Esophagus muscularis mucosa (tissue), 4 donors: ENCODE measurements at regions of chr4 and their contacts with region 1.

Region 1: GRCh38 chr4:154399259-154399974 is 92.2 kb downstream of the DCHS2 start:
- DNase-seq: no peak
- H3K4me3 ChIP-seq: peak overlapping the region; percentile 13 to 40 (median 23)
- H3K27ac ChIP-seq: no peak overlapping the region
- H3K4me1 ChIP-seq: no peaks in the 10 kb centered on the region
- H3K27me3 ChIP-seq: no peaks in the 10 kb centered on the region
- CTCF ChIP-seq: peak; percentile 31 to 47 (median 44)
- EP300 ChIP-seq: no peak
- POLR2A ChIP-seq: no peak

Region 2: GRCh38 chr4:154160519-154161301 is 238.7 kb before region 1 on chr4:
- intact Hi-C with region 1: no loop called
- DNase-seq: no peak
- H3K4me3 ChIP-seq: no peak overlapping the region
- H3K27ac ChIP-seq: no peak overlapping the region
- H3K4me1 ChIP-seq: peaks cover 0 to 10% (median 4%) of the 10 kb centered on the region in 4 donors
- H3K27me3 ChIP-seq: no peaks in the 10 kb centered on the region
- CTCF ChIP-seq: no peak
- EP300 ChIP-seq: no peak
- POLR2A ChIP-seq: no peak

Region 3: GRCh38 chr4:154457471-154457870 is 58.1 kb after region 1 on chr4:
- intact Hi-C with region 1: no loop called
- DNase-seq: no peak
- H3K4me3 ChIP-seq: no peak overlapping the region
- H3K27ac ChIP-seq: no peak overlapping the region
- H3K4me1 ChIP-seq: no peaks in the 10 kb centered on the region
- H3K27me3 ChIP-seq: no peaks in the 10 kb centered on the region
- CTCF ChIP-seq: no peak
- EP300 ChIP-seq: no peak
- POLR2A ChIP-seq: no peak

Region 4: GRCh38 chr4:154506253-154506652 is 106.8 kb after region 1 on chr4:
- intact Hi-C with region 1: loop called (anchors 2 kb)
- DNase-seq: peak; percentile 80
- H3K4me3 ChIP-seq: no peak overlapping the region
- H3K27ac ChIP-seq: no peak overlapping the region
- H3K4me1 ChIP-seq: no peaks in the 10 kb centered on the region
- H3K27me3 ChIP-seq: peaks cover 0 to 12% (median 0%) of the 10 kb centered on the region in 4 donors
- CTCF ChIP-seq: peak; percentile 34 to 51 (median 42)
- EP300 ChIP-seq: no peak
- POLR2A ChIP-seq: no peak

Region 5: GRCh38 chr4:154626793-154627484 is 227.5 kb after region 1 on chr4:
- intact Hi-C with region 1: loop called (anchors 10 kb)
- DNase-seq: no peak
- H3K4me3 ChIP-seq: peak overlapping the region; percentile 41 to 55 (median 46)
- H3K27ac ChIP-seq: no peak overlapping the region
- H3K4me1 ChIP-seq: peaks cover 8 to 13% (median 10%) of the 10 kb centered on the region in 4 donors
- H3K27me3 ChIP-seq: peaks cover 0 to 15% (median 0%) of the 10 kb centered on the region in 4 donors
- CTCF ChIP-seq: peak in 2 of 3 experiments; percentile 42 to 56
- EP300 ChIP-seq: no peak
- POLR2A ChIP-seq: no peak